Activated T-helper 1 cell treated with anti-CD3 and anti-CD28 coated beads, Interleukin-12 subunit alpha, Interleukin-12 subunit beta, Interleukin-2, Interleukin-4 antibody, amounts not matched to agents 30 ng/mL and 10 ng/mL and 1 ng/mL, durations not matched to agents 14 hours and 24 hours and 36 hours (primary cell): ENCODE measurements at regions of chr3 and their contacts with region 1.

Region 1: GRCh38 chr3:38117748-38118420 is 19.0 kb downstream of the ACAA1 start:
- DNase-seq: peak; percentile 60
- H3K4me3 Mint-ChIP-seq: no peak overlapping the region
- H3K27ac Mint-ChIP-seq: no peak overlapping the region
- H3K4me1 Mint-ChIP-seq: no peaks in the 10 kb centered on the region
- H3K27me3 Mint-ChIP-seq: no peaks in the 10 kb centered on the region

Region 2: DNA sequence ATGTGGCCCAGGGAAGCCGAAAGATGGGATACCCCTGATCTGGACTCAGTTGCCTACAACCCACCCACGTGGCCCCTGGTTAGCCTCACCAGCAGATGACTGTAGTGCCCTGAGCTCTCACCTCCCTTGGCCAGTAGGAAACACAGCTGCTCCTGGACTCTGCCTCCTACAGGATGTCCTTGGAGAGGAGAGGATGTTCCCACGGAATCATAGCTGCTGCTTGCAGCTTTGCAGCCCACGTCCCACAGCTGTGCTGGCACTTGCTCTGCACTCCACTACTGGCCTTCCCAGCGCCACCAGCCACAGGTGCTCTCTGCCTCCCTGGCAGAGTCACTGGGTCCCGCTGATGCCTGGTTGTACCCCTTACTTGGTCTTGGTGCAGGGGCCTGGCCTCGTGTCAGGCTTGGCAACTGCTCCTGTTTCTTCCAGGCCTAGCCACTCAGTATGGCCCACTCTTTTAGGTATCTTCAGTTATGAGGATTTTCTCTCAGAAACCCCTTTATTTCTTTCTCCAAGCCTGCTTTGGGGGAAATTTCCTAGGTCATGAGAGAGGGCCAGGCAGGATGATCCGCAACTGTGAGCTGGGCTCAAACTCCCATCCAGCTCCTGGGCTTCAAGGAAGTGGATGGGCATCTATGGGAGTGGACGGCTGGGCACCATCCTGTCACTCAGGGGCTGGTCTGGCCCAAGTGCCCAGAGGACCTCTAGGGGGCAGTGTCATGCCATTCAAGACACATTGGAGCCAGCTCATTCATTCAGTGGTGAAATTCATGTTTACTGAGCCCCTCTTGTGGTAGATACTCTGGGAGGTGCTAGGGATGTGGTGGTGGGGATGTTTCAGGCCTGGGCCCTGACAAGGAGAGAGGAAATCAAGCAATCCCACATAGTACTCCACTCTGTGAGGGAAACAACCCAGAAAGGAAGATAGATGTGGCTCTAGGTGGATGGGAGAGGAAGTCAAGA is 143.5 kb before region 1 on chr3:
- intact Hi-C with region 1: loop called (anchors 1 kb)
- DNase-seq: peak; percentile 54
- H3K4me3 Mint-ChIP-seq: no peak overlapping the region
- H3K27ac Mint-ChIP-seq: no peak overlapping the region
- H3K4me1 Mint-ChIP-seq: peaks cover 6% of the 10 kb centered on the region
- H3K27me3 Mint-ChIP-seq: no peaks in the 10 kb centered on the region

Region 3: GRCh38 chr3:38257583-38257982 is 139.7 kb after region 1 on chr3:
- intact Hi-C with region 1: loop called (anchors 5 kb)
- DNase-seq: no peak
- H3K4me3 Mint-ChIP-seq: no peak overlapping the region
- H3K27ac Mint-ChIP-seq: peak overlapping the region; percentile 4
- H3K4me1 Mint-ChIP-seq: peaks cover 23% of the 10 kb centered on the region
- H3K27me3 Mint-ChIP-seq: no peaks in the 10 kb centered on the region

Region 4: GRCh38 chr3:38297947-38298711 is 180.2 kb after region 1 on chr3:
- intact Hi-C with region 1: loop called (anchors 1 kb)
- DNase-seq: no peak
- H3K4me3 Mint-ChIP-seq: no peak overlapping the region
- H3K27ac Mint-ChIP-seq: no peak overlapping the region
- H3K4me1 Mint-ChIP-seq: no peaks in the 10 kb centered on the region
- H3K27me3 Mint-ChIP-seq: peaks cover 21% of the 10 kb centered on the region

Region 5: DNA sequence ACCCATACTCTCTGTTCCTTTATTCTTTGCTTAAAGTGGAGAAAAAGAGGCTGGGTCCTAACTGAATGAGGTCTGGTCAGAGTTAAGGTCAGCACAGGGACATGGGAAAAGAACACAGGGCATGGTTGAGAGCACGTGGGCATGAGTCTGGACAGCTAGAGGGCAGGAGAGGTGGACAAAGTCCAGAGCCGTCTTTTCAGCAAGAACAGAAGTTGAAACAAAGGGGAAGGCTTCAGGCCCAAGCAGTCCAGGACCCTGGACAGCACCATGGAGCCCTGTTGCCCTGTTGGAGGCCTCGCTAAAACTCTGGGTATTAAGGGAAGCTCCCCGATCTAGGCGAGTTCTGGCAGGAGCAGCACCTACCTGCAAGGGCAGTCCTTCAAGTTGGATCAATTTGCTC is 279.4 kb after region 1 on chr3:
- intact Hi-C with region 1: no loop called
- DNase-seq: no peak
- H3K4me3 Mint-ChIP-seq: no peak overlapping the region
- H3K27ac Mint-ChIP-seq: no peak overlapping the region
- H3K4me1 Mint-ChIP-seq: no peaks in the 10 kb centered on the region
- H3K27me3 Mint-ChIP-seq: no peaks in the 10 kb centered on the region

Region 6: DNA sequence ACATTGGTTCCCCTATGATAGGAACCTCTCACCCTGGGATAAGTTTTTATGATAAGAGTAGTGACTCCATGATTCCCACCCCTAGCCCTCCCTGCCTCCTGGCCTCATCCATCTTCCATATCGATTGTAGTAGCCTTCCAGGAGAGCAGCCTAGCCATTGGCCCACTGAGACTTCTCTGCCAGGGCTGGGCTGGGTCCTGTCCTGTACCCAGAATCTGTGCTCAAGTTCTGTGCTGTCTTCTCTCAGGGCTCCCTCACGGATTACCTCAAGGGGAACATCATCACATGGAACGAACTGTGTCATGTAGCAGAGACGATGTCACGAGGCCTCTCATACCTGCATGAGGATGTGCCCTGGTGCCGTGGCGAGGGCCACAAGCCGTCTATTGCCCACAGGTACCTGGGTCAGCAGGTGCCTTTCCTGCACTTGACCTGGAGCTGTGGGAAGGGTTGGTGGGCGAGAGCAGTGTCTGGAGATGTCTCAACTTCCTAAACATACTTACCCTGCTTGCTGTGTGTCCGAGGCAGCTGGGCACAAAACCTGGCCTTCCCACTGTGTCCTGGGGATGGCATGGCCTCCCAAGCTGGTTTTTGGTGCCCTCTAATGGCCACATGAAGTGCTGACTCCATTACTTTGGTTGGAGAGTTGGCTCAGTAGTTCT is 361.7 kb after region 1 on chr3:
- intact Hi-C with region 1: loop called (anchors 1 kb)
- DNase-seq: peak; percentile 21
- H3K4me3 Mint-ChIP-seq: no peak overlapping the region
- H3K27ac Mint-ChIP-seq: no peak overlapping the region
- H3K4me1 Mint-ChIP-seq: no peaks in the 10 kb centered on the region
- H3K27me3 Mint-ChIP-seq: no peaks in the 10 kb centered on the region